ENCODE measurements at regions of chr10 and their contacts with region 1.

Region 1: DNA sequence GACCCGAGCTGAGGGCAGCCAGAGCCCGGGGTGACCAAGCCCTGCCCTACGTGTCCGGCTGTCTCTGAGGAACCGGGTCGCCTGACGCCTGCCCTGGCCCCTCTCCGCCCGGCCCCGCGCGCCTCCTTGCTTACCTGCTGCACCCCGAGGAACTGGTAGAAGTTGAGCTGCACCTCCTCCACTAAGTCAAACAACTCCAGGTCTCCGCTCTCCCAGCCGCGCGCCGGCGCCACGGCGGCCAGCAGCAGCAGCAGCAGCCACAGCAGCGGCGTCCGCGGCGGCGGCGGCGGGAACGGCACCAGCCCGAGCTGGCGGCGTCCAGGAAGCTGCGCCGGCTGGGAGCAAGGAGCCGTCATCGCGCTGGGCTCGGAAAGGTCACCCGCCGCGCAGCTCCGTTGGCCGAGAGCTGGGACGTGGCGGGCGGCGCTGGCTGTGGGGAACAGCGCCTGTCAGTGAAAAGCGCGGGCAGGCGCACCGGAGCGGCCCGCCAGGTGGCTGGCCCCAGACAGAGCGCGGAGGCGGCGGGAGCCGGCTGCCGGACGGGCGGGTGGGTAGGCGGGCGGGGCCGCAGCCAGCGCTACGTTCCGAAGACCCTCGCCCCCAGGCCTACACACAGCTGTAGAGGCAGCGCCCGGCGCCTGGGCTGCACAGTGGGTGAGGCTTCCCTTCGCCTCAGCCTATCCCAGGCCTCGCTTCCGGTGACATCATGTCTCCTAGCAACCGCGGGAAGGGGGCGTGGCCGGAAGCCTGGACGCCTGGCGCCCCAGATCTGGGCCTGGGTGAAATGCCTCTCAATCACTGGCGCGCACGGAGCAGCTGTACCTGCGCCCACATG is at the start of gene DNAJC1:
- DNase-seq: peak; percentile 95
- CTCF ChIP-seq: no peak

Region 2: GRCh38 chr10:22436884-22437619 is 433.8 kb after region 1 on chr10:
- in situ Hi-C with region 1: loop called (anchors 25 kb)
- DNase-seq: peak; percentile 84
- CTCF ChIP-seq: no peak

Region 3: GRCh38 chr10:22646388-22646853 is 643.1 kb after region 1 on chr10:
- in situ Hi-C with region 1: no loop called
- DNase-seq: no peak
- CTCF ChIP-seq: no peak

Region 4: DNA sequence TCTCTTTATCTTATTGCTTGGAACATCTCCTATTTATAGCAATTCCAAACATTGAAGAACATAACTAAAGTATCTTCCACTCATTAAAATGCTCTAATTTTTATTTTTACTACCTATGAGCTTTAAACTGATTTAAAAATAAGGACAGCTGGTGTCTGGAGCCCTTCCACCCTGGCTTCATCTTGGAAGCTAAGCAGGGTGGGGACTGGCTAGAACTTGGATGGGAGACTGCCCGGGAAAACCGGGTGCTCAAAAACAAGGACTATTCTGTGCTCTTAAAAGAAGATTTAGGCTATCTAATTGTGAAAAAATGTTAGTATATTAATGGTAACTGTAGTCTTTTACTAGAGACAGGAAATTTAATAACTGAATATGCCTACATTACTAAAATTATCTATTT is 993.8 kb after region 1 on chr10:
- in situ Hi-C with region 1: loop called (anchors 10 kb)
- DNase-seq: no peak
- CTCF ChIP-seq: no peak

Measured in GM13976 (cell line).